OCI-LY7 (cell line): ENCODE measurements at regions of chr5 and their contacts with region 1.

Region 1: GRCh38 chr5:143435210-143435657 is 31.7 kb upstream of the NR3C1 start:
- DNase-seq: peak; percentile 95
- H3K4me3 ChIP-seq: peak overlapping the region; percentile 72
- H3K27ac ChIP-seq: peak overlapping the region; percentile 96
- H3K4me1 ChIP-seq: peaks cover 68% of the 10 kb centered on the region
- CTCF ChIP-seq: no peak

Region 2: DNA sequence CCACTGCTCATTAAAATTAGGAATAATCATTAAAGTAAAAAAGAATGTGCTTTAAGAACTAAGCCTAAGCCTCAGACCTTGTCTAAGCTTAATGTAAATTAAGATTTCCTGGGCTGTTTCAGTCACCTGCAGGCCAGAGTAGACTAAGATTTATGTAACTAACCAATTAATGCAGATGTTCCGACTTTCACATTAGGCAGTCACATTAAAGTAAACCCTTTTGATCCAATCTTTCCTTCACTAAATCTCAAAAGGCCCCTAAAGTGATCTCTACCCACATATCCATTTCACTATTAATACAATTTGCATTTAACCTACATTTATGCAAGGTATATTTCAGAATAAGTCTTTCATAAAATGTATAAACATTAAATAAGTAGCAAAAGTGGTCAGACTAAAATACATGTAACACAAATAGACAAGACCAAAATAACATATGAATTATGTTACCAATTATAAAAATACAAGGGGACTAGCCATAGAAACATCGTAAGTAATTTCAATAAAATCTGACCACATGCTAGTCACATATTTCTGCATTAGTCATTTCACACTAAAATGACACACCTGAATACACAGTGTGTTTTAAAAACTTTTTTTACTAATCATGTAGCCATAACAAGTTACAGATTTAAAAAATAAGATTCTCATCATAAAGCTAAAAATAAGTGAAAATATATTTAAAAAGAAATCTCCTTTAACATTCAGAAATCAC is 39.4 kb before region 1 on chr5:
- CTCF ChIA-PET with region 1: no interaction called
- POLR2A ChIA-PET with region 1: interaction called, 39 read pairs
- intact Hi-C with region 1: no loop called
- DNase-seq: peak; percentile 48
- H3K4me3 ChIP-seq: peak overlapping the region; percentile 91
- H3K27ac ChIP-seq: peak overlapping the region; percentile 34
- H3K4me1 ChIP-seq: peaks cover 50% of the 10 kb centered on the region
- CTCF ChIP-seq: no peak

Region 3: GRCh38 chr5:143413958-143414669 is 21.1 kb before region 1 on chr5:
- CTCF ChIA-PET with region 1: interaction called, 4 read pairs
- POLR2A ChIA-PET with region 1: interaction called, 119 read pairs
- intact Hi-C with region 1: loop called (anchors 1 kb)
- DNase-seq: peak; percentile 69
- H3K4me3 ChIP-seq: peak overlapping the region; percentile 55
- H3K27ac ChIP-seq: peak overlapping the region; percentile 68
- H3K4me1 ChIP-seq: peaks cover 74% of the 10 kb centered on the region
- CTCF ChIP-seq: peak; percentile 53

Region 4: DNA sequence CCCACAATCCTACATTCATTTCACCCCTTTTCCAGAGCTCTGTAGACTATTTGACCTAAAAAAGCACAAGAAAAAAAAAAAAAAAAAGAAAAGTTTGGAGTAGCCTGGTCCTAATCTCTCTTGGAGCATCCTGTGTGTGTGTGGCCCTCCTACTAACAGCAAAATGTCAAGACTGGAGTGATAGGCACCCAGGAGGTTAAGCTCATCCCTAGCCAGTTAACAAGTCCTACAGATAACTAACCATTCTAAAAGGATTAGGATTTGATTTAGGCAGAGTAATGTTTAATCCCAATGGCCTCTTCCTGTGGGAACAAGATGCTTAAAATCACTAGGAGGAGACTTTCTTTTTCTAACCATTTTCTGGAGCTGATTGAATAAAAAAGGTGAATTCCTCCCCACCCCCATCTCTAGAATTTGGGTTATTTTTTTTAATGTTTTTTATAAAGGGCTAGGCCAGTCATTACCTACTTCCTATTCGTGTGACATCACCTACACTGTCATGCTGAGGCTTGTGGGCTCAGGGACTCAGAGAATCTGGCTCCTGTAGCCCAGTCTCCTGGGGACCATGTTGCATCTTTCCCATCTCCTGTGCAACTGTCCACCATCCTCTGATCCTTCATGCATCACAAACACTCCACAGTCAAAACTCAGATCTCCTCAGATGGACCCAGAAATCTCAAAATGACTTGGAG is 11.4 kb after region 1 on chr5:
- CTCF ChIA-PET with region 1: interaction called, 6 read pairs
- POLR2A ChIA-PET with region 1: interaction called, 28 read pairs
- intact Hi-C with region 1: no loop called
- DNase-seq: no peak
- H3K4me3 ChIP-seq: no peak overlapping the region
- H3K27ac ChIP-seq: no peak overlapping the region
- H3K4me1 ChIP-seq: peaks cover 26% of the 10 kb centered on the region
- CTCF ChIP-seq: no peak

Region 5: GRCh38 chr5:143582869-143583268 is 147.6 kb after region 1 on chr5:
- CTCF ChIA-PET with region 1: no interaction called
- POLR2A ChIA-PET with region 1: interaction called, 25 read pairs
- intact Hi-C with region 1: no loop called
- DNase-seq: peak; percentile 71
- H3K4me3 ChIP-seq: peak overlapping the region; percentile 7
- H3K27ac ChIP-seq: peak overlapping the region; percentile 64
- H3K4me1 ChIP-seq: peaks cover 43% of the 10 kb centered on the region
- CTCF ChIP-seq: no peak

Region 6: GRCh38 chr5:143592648-143593047 is 157.4 kb after region 1 on chr5:
- CTCF ChIA-PET with region 1: no interaction called
- POLR2A ChIA-PET with region 1: interaction called, 42 read pairs
- intact Hi-C with region 1: loop called (anchors 2 kb)
- DNase-seq: peak; percentile 93
- H3K4me3 ChIP-seq: peak overlapping the region; percentile 52
- H3K27ac ChIP-seq: peak overlapping the region; percentile 93
- H3K4me1 ChIP-seq: peaks cover 73% of the 10 kb centered on the region
- CTCF ChIP-seq: no peak

Region 7: DNA sequence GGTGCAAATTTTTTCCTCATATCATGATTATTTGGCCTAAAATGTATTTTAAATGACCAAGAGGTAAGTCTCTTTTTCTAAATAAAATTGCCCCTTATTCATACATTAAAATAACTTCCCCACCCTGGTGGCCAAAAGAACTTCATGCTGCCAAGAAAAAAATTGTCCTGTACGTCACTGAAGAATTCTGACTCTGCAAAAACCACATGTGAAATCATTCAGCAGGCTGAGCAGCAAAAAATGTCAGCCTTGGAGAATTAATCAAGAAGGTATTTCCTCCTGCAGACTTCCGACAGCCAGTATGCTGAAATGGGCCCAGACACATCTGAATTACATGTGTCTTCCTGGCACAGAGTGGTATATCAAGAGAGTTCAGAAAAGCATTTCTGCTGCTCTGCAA is 282.2 kb after region 1 on chr5:
- CTCF ChIA-PET with region 1: no interaction called
- POLR2A ChIA-PET with region 1: no interaction called
- intact Hi-C with region 1: no loop called
- DNase-seq: no peak
- H3K4me3 ChIP-seq: no peak overlapping the region
- H3K27ac ChIP-seq: no peak overlapping the region
- H3K4me1 ChIP-seq: peaks cover 21% of the 10 kb centered on the region
- CTCF ChIP-seq: no peak

Region 8: GRCh38 chr5:143824851-143825720 is 389.9 kb after region 1 on chr5:
- CTCF ChIA-PET with region 1: no interaction called
- POLR2A ChIA-PET with region 1: interaction called, 6 read pairs
- intact Hi-C with region 1: loop called (anchors 10 kb)
- DNase-seq: peak; percentile 86
- H3K4me3 ChIP-seq: no peak overlapping the region
- H3K27ac ChIP-seq: no peak overlapping the region
- H3K4me1 ChIP-seq: peaks cover 8% of the 10 kb centered on the region
- CTCF ChIP-seq: peak; percentile 97

Region 9: GRCh38 chr5:144028636-144029035 is 593.4 kb after region 1 on chr5:
- CTCF ChIA-PET with region 1: no interaction called
- POLR2A ChIA-PET with region 1: no interaction called
- intact Hi-C with region 1: no loop called
- DNase-seq: no peak
- H3K4me3 ChIP-seq: no peak overlapping the region
- H3K27ac ChIP-seq: no peak overlapping the region
- H3K4me1 ChIP-seq: no peaks in the 10 kb centered on the region
- CTCF ChIP-seq: no peak